ENCODE measurements at regions of chr14 and their contacts with region 1.

Region 1: GRCh38 chr14:63745858-63746425 is 18.1 kb upstream of the SGPP1 start:
- DNase-seq: peak; percentile 87
- ATAC-seq: peak; percentile 75
- H3K4me3 ChIP-seq: peak overlapping the region in 2 of 5 experiments; percentile 1 to 41
- H3K4me3 Mint-ChIP-seq: peak overlapping the region; percentile 76
- H3K27ac ChIP-seq: peak overlapping the region; percentile 94 to 97
- H3K27ac Mint-ChIP-seq: peak overlapping the region; percentile 99
- H3K4me1 ChIP-seq: peaks cover 39 to 54% of the 10 kb centered on the region in 2 donors
- H3K4me1 Mint-ChIP-seq: peaks cover 40% of the 10 kb centered on the region
- H3K27me3 ChIP-seq: no peaks in the 10 kb centered on the region
- H3K27me3 Mint-ChIP-seq: no peaks in the 10 kb centered on the region
- CTCF ChIP-seq: no peak

Region 2: GRCh38 chr14:62289471-62289870 is 1456.5 kb before region 1 on chr14:
- CTCF ChIA-PET with region 1: no interaction called
- POLR2A ChIA-PET with region 1: no interaction called
- intact Hi-C with region 1: no loop called
- DNase-seq: no peak
- ATAC-seq: no peak
- H3K4me3 ChIP-seq: no peak overlapping the region
- H3K4me3 Mint-ChIP-seq: no peak overlapping the region
- H3K27ac ChIP-seq: no peak overlapping the region
- H3K27ac Mint-ChIP-seq: no peak overlapping the region
- H3K4me1 ChIP-seq: no peaks in the 10 kb centered on the region
- H3K4me1 Mint-ChIP-seq: no peaks in the 10 kb centered on the region
- H3K27me3 ChIP-seq: no peaks in the 10 kb centered on the region
- H3K27me3 Mint-ChIP-seq: no peaks in the 10 kb centered on the region
- CTCF ChIP-seq: no peak

Region 3: DNA sequence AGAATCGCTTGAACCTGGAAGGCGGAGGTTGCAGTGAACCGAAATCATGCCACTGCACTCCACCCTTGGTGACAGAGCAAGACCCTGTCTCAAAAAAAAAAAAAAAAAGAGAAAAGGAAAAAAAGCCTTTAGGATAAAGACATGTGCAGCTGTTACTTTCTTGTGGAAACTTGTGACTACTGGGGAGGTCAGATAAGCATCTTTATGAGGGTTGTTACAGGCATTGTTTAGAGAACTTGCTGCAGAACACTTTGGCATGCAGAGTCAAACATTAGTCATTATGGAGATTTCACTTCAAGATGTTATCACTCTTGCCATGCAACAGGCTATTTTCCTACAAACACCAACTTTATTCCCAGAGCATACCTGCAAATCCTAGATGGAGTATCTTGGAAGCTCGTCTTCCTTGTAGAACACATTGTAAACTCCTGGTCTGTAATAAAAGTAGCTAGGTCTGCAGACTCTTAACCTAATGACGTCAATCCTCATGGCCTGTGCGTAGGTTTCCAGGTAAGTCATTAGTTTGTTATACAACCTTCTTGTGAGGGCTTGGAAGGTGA is 68.0 kb before region 1 on chr14:
- CTCF ChIA-PET with region 1: no interaction called
- POLR2A ChIA-PET with region 1: no interaction called
- intact Hi-C with region 1: no loop called
- DNase-seq: no peak
- ATAC-seq: no peak
- H3K4me3 ChIP-seq: no peak overlapping the region
- H3K4me3 Mint-ChIP-seq: no peak overlapping the region
- H3K27ac ChIP-seq: no peak overlapping the region
- H3K27ac Mint-ChIP-seq: no peak overlapping the region
- H3K4me1 ChIP-seq: no peaks in the 10 kb centered on the region
- H3K4me1 Mint-ChIP-seq: no peaks in the 10 kb centered on the region
- H3K27me3 ChIP-seq: no peaks in the 10 kb centered on the region
- H3K27me3 Mint-ChIP-seq: no peaks in the 10 kb centered on the region
- CTCF ChIP-seq: no peak

Region 4: DNA sequence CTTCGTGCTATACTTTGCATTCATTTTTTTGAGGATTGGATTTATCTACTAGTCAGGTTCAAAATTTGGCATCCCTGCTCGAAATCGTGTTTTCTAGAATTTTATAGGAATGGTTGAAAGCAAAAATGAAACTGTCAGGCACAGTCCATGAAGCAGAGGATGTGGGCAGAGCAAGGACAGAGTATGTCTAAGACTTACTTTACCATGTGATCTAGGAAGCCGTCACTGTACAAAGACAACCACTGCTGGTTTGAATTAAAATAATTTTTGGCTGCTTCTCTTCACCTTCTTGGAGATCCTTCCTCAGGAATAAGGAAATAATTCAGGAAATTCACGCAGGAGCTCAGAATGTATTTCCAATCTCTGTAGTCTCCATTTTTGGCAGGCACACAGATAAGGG is 13.5 kb after region 1 on chr14:
- CTCF ChIA-PET with region 1: interaction called, 5 read pairs
- POLR2A ChIA-PET with region 1: no interaction called
- intact Hi-C with region 1: loop called (anchors 2 kb)
- DNase-seq: peak; percentile 45
- ATAC-seq: peak; percentile 63
- H3K4me3 ChIP-seq: peak overlapping the region in 2 of 5 experiments; percentile 30 to 37
- H3K4me3 Mint-ChIP-seq: peak overlapping the region; percentile 87
- H3K27ac ChIP-seq: peak overlapping the region; percentile 35 to 46
- H3K27ac Mint-ChIP-seq: peak overlapping the region; percentile 81
- H3K4me1 ChIP-seq: peaks cover 10 to 15% of the 10 kb centered on the region in 2 donors
- H3K4me1 Mint-ChIP-seq: peaks cover 19% of the 10 kb centered on the region
- H3K27me3 ChIP-seq: no peaks in the 10 kb centered on the region
- H3K27me3 Mint-ChIP-seq: no peaks in the 10 kb centered on the region
- CTCF ChIP-seq: no peak

Measured in B cell (primary cell).